PC-3 (cell line): ENCODE measurements at regions of chr14 and their contacts with region 1.

Region 1: GRCh38 chr14:35215110-35215876 is 76.9 kb upstream of the PSMA6 start:
- DNase-seq: peak; percentile 63
- ATAC-seq: peak; percentile 34; the same call in 1 of the 2 replicates
- H3K4me3 ChIP-seq: no peak overlapping the region
- H3K27ac ChIP-seq: no peak overlapping the region
- H3K4me1 ChIP-seq: peaks cover 14% of the 10 kb centered on the region
- H3K27me3 ChIP-seq: no peaks in the 10 kb centered on the region
- CTCF ChIP-seq: peak; percentile 73

Region 2: DNA sequence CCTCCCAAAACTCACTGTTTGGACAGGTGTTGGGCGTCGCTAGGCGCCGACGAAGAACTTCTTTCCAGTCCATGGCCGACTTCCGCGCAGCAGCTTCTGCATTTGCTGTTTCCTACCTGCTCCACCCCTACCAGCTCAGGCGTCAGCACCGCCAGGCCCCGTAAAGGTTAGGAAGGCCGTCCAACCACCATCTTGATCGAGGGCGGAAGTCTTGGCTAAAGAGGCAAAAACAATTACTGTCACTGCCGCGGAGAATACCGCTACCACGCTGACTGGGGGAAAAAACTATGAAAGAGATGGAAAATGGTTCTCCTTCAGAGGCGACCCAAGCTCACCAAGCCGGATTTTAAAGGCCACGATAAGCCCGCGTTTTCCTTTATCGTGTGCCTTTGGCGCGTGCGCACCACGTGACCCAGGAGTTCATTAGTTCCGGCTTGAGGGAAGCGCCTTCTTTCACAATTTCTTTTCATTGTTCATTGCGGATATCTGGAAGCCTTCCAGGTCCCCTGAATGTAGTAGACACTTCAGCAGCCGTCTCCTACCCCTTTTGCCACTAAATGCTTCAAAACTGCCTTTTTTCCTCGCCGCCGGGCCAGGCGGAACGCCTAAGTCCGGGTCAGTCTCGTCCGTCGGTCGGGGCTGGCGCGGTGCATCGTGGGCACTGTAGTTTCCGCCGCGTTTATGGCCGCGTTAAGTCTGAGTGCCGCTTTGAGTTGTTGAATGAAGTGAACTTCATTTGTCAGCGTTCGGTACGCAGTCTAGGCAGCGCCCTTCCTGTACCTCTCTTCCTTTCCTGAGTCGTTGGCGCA is 93.2 kb before region 1 on chr14 and contains the starts of genes PPP2R3C and PRORP:
- CTCF ChIA-PET with region 1: no interaction called
- POLR2A ChIA-PET with region 1: interaction called, 41 read pairs
- intact Hi-C with region 1: no loop called
- DNase-seq: peak; percentile 98
- ATAC-seq: peak; percentile 85
- H3K4me3 ChIP-seq: peak within 1 kb of the TSS; percentile 83
- H3K27ac ChIP-seq: peak within 1 kb of the TSS; percentile 92
- H3K4me1 ChIP-seq: peaks cover 13% of the 10 kb centered on the region
- H3K27me3 ChIP-seq: no peaks in the 10 kb centered on the region
- CTCF ChIP-seq: no peak
- total RNA-seq, gene PPP2R3C: 15.2 and 20.3 TPM in 2 replicates
- total RNA-seq, gene PRORP: 25.1 and 25.3 TPM in 2 replicates

Region 3: GRCh38 chr14:35140718-35141581 is 74.3 kb before region 1 on chr14:
- CTCF ChIA-PET with region 1: interaction called, 6 read pairs
- POLR2A ChIA-PET with region 1: interaction called, 3 read pairs
- intact Hi-C with region 1: loop called (anchors 2 kb)
- DNase-seq: peak; percentile 61
- ATAC-seq: peak; percentile 20; the same call in 1 of the 2 replicates
- H3K4me3 ChIP-seq: no peak overlapping the region
- H3K27ac ChIP-seq: no peak overlapping the region
- H3K4me1 ChIP-seq: no peaks in the 10 kb centered on the region
- H3K27me3 ChIP-seq: no peaks in the 10 kb centered on the region
- CTCF ChIP-seq: peak; percentile 73

Region 4: DNA sequence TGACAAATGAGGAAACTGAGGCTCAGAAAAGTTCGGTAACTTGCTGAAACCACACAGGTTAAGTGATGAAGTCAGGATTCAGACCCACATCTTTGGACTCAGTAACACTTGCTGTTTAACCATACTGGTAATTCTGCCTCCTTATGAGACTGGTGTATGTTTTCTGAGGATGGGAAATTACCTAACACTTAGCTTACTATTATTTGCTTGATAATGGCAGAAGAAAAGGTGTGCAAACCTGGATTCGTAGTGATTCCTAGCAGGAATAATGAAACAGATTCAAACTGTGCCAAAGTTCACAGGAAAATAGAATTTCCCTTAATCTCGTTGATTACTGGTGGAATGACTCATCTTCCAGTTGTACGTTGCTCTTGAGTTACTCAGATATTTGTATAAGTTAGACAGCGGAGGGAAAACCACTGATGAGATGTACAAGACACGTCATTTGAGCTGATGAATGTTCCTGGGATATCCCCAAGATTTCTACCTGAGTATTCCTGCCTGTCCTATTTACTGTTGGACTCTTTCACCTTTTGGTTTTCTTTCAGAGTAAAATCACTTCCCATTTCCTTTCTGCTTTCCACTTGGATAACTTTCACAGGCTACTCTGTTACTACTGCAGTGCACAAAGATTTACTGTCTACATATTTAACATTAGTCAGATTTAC is 55.4 kb before region 1 on chr14:
- CTCF ChIA-PET with region 1: interaction called, 5 read pairs
- POLR2A ChIA-PET with region 1: no interaction called
- intact Hi-C with region 1: loop called (anchors 5 kb)
- DNase-seq: peak; percentile 97
- ATAC-seq: peak; percentile 99
- H3K4me3 ChIP-seq: peak overlapping the region; percentile 49
- H3K27ac ChIP-seq: peak overlapping the region; percentile 95
- H3K4me1 ChIP-seq: peaks cover 42% of the 10 kb centered on the region
- H3K27me3 ChIP-seq: no peaks in the 10 kb centered on the region
- CTCF ChIP-seq: no peak

Region 5: GRCh38 chr14:35261774-35262173 is 46.5 kb after region 1 on chr14:
- CTCF ChIA-PET with region 1: no interaction called
- POLR2A ChIA-PET with region 1: no interaction called
- intact Hi-C with region 1: no loop called
- DNase-seq: no peak
- ATAC-seq: no peak
- H3K4me3 ChIP-seq: no peak overlapping the region
- H3K27ac ChIP-seq: no peak overlapping the region
- H3K4me1 ChIP-seq: peaks cover 10% of the 10 kb centered on the region
- H3K27me3 ChIP-seq: no peaks in the 10 kb centered on the region
- CTCF ChIP-seq: peak; percentile 19; the same call in 1 of the 2 replicates

Region 6: DNA sequence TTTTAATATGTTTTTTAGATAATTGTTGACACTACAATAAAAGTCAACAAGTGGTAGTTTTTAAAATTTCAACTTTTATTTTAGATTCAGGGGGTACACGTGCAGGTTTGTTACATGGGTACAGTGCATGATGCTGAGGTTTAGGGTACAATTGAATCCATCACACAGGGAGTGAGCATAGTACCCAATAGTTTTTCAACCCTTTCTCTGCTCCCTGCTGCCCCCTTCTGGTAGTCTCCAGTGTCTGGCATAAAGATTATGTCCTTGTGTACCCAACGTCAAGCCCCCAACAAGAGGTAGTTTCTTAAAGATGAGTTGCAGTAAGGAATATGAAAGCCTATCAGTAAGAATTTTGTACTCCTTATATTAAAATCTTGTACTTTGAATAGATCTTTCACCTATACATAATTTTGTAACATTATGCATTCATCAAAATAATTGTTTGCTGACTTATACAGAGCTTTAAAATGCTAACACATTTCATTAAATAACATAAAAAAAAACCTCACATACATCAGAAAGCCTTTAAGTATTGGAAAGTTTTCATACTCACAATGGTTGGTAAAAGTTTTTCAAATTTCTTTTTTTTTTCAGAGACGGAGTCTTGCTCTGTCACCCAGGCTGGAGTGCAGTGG is 599.2 kb after region 1 on chr14:
- CTCF ChIA-PET with region 1: no interaction called
- POLR2A ChIA-PET with region 1: no interaction called
- intact Hi-C with region 1: loop called (anchors 10 kb)
- DNase-seq: peak; percentile 74
- ATAC-seq: peak; percentile 64
- H3K4me3 ChIP-seq: no peak overlapping the region
- H3K27ac ChIP-seq: no peak overlapping the region
- H3K4me1 ChIP-seq: no peaks in the 10 kb centered on the region
- H3K27me3 ChIP-seq: no peaks in the 10 kb centered on the region
- CTCF ChIP-seq: peak; percentile 80